Activated naive CD4-positive, alpha-beta T cell treated with anti-CD3 and anti-CD28 coated beads for 36 hours (primary cell): ENCODE measurements at regions of chr13 and their contacts with region 1.

Region 1: GRCh38 chr13:45367358-45367757 is 26.4 kb upstream of the TPT1 start:
- DNase-seq: peak; percentile 97
- H3K4me3 Mint-ChIP-seq: peak overlapping the region; percentile 32
- H3K27ac Mint-ChIP-seq: peak overlapping the region; percentile 87
- H3K4me1 Mint-ChIP-seq: peaks cover 57% of the 10 kb centered on the region
- H3K27me3 Mint-ChIP-seq: no peaks in the 10 kb centered on the region

Region 2: DNA sequence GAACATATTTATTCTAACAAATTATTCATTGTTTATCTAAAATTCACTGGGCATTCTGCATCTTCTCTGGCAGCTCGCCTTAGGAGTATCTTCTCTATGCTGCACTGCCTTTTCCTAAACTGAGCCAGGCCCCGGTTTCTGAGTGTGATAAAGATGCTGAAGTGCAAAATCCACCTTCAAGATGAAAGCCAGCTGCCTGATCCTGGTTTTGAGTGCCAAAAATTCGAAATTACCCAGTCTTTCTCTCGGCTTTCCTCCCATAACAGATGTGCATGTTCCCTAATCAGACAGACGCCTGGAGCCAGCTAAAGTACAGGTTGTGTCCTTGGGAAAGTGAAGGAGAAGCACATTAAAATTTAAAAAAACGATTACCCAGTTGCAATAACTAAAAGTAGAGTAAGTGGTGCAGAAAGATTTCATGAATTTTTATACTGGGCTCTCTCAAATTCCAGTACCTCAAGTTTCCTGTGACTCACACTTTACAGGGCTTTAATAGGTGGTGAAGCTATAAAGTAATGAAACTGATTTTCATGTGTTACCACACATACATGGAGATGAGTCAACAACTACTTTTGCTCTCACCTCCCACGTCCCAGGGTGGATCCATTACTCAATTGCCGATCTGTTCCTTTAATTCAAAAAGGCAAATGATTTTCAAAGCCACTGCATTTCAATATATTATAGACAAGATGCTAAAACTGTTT is 312.0 kb before region 1 on chr13:
- CTCF ChIA-PET with region 1: interaction called, 3 read pairs
- intact Hi-C with region 1: loop called (anchors 1 kb)
- DNase-seq: peak; percentile 86
- H3K4me3 Mint-ChIP-seq: no peak overlapping the region
- H3K27ac Mint-ChIP-seq: no peak overlapping the region
- H3K4me1 Mint-ChIP-seq: peaks cover 30% of the 10 kb centered on the region
- H3K27me3 Mint-ChIP-seq: peaks cover 23% of the 10 kb centered on the region

Region 3: DNA sequence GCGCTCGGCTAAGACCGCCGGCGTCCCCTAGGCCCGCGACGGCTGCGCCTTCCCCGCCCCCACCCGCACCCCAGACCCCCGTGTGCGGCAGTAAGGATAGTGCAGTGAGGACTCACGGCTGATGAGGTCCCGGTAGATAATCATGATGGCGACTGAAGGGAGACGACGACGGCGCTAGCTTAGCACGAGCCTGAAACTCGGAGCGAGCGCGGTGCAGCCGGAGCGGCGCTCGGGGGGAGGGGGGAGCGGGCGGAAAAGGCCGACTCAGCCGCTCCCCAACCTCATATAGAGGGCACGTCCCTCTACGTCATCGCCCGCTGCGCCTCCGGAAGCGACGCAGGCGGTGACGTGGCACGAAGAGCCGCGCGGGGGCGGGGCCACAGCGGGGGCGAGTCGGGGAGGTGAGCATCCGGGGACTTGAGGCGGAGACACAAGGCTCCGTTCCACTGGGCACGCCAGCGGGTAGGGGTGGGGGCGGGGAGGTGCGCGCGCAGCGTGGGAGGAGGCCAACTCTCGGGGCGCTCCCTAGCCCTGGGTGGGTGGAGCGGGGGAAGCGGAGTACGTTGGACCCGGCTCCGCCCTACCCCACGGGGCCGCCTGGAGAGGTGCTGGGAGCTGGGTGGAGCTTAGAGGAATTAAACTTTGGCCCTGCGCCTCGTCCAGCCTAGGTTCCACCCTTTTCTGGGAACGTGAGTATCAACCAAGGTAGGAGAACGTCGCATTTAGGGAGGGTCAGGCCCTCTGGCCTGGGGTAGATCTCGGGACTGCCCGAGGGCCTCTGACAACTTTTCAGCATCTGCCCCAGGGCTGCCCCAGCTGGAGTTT is 26.2 kb before region 1 on chr13 and contains the start of gene TPT1:
- CTCF ChIA-PET with region 1: interaction called, 11 read pairs
- intact Hi-C with region 1: loop called (anchors 1 kb)
- DNase-seq: peak; percentile 100
- H3K4me3 Mint-ChIP-seq: peak within 1 kb of the TSS; percentile 91
- H3K27ac Mint-ChIP-seq: peak within 1 kb of the TSS; percentile 99
- H3K4me1 Mint-ChIP-seq: peaks cover 43% of the 10 kb centered on the region
- H3K27me3 Mint-ChIP-seq: no peaks in the 10 kb centered on the region
- total RNA-seq, gene TPT1: 3,331 to 3,631 TPM

Region 4: DNA sequence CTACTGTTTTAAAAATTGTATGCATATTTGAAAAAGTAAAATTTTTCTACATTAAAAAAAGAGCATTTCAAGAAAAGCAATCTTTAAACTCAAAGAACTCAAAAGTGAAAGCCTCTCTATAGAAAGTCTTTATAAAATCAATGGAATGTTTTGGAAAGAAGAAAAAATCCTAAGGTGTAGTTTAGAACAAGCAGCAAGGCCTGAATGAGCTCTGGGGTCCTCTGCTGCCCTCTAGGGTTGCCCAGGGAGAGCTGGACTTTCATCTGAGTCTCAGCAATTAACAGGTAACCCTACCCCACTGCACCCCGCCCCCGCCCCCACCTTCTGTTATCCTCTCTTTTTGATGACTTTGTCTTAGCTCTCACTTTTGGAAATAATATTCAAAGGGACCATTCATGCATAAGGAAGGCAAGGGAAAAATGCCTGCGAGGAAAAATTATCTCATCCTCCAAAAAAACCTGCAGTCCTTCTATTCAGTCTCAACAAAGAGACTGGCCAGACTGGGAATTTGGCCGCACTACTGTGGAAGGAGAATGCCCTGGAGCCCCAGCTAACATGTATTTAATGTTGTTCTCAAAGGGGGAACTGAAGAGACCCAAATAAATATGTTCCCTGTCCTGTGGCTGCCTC is 26.7 kb after region 1 on chr13:
- CTCF ChIA-PET with region 1: interaction called, 83 read pairs
- intact Hi-C with region 1: loop called (anchors 1 kb)
- DNase-seq: peak; percentile 61
- H3K4me3 Mint-ChIP-seq: no peak overlapping the region
- H3K27ac Mint-ChIP-seq: no peak overlapping the region
- H3K4me1 Mint-ChIP-seq: peaks cover 47% of the 10 kb centered on the region
- H3K27me3 Mint-ChIP-seq: no peaks in the 10 kb centered on the region

Region 5: DNA sequence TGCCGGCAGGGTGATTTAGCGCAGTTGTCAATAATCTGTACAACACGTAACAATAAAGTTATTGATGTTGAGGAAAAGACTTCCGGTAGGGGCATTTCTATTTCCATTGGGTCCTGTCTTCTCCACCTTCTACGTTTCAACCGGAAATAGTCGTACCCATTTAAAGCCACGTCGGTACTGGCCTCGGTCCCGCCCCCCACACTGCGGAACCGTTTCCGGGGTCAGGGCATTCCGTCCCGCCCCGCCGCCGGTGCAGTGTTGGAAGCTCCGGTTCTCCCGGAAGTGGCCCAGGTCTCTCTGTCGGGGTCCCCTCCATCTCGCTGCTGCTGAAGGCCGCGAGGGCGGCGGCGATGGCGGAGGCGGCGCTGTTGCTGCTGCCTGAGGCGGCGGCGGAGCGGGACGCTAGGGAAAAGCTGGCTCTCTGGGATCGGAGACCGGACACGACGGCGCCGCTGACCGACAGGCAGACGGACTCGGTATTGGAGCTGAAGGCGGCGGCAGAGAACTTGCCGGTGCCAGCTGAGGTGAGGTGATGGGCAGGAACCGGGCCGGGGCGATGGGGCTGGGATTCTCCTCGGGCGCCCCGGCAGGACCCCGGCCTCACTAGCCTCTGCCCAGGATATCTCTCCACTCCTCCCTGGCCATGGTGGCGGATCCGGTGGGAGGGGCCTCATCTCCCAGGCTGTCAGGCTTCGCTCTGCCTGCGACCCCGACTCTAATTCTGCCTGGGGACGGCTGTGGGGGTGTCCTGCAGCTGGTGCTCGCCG is 97.5 kb after region 1 on chr13 and contains the start of gene COG3:
- CTCF ChIA-PET with region 1: interaction called, 14 read pairs
- intact Hi-C with region 1: loop called (anchors 1 kb)
- DNase-seq: peak; percentile 97
- H3K4me3 Mint-ChIP-seq: peak within 1 kb of the TSS; percentile 88
- H3K27ac Mint-ChIP-seq: peak within 1 kb of the TSS; percentile 92
- H3K4me1 Mint-ChIP-seq: peaks cover 59% of the 10 kb centered on the region
- H3K27me3 Mint-ChIP-seq: no peaks in the 10 kb centered on the region
- total RNA-seq, gene COG3: 19.1 to 19.3 TPM

Region 6: GRCh38 chr13:45490068-45490467 is 122.7 kb after region 1 on chr13:
- CTCF ChIA-PET with region 1: interaction called, 6 read pairs
- intact Hi-C with region 1: loop called (anchors 1 kb)
- DNase-seq: peak; percentile 33
- H3K4me3 Mint-ChIP-seq: no peak overlapping the region
- H3K27ac Mint-ChIP-seq: no peak overlapping the region
- H3K4me1 Mint-ChIP-seq: peaks cover 3% of the 10 kb centered on the region
- H3K27me3 Mint-ChIP-seq: no peaks in the 10 kb centered on the region

Region 7: DNA sequence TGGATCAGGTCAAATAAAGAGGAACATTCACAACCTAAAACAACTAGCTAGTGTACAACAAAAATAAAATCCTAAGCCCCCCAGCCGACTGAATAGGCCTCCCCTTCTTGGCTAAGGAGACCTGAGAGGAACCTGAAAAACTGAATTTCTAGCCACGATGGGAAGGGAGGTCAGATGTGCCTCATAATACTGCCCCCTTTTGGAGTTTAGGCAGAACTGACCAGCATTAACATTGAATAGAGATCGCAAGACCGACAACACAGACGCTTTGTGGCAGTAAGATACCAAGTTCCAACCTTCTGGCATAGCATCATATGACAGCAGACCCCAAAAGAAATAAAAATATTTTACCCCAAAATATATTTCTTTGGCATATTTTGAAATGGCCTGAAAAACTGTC is 350.7 kb after region 1 on chr13:
- CTCF ChIA-PET with region 1: no interaction called
- intact Hi-C with region 1: loop called (anchors 2 kb)
- DNase-seq: peak; percentile 10
- H3K4me3 Mint-ChIP-seq: no peak overlapping the region
- H3K27ac Mint-ChIP-seq: no peak overlapping the region
- H3K4me1 Mint-ChIP-seq: no peaks in the 10 kb centered on the region
- H3K27me3 Mint-ChIP-seq: no peaks in the 10 kb centered on the region